MCF 10A (cell line): ENCODE measurements at regions of chr4 and their contacts with region 1.

Region 1: GRCh38 chr4:52983563-52984303 is 121.6 kb downstream of the RASL11B start:
- DNase-seq: peak; percentile 77
- H3K4me3 Mint-ChIP-seq: no peak overlapping the region
- H3K27ac Mint-ChIP-seq: no peak overlapping the region
- H3K4me1 Mint-ChIP-seq: no peaks in the 10 kb centered on the region
- H3K27me3 Mint-ChIP-seq: no peaks in the 10 kb centered on the region
- CTCF ChIP-seq: peak; percentile 50

Region 2: GRCh38 chr4:52234561-52235440 is 748.9 kb before region 1 on chr4:
- CTCF ChIA-PET with region 1: interaction called, 47 read pairs
- POLR2A ChIA-PET with region 1: no interaction called
- intact Hi-C with region 1: loop called (anchors 1 kb)
- DNase-seq: peak; percentile 69
- H3K4me3 Mint-ChIP-seq: no peak overlapping the region
- H3K27ac Mint-ChIP-seq: no peak overlapping the region
- H3K4me1 Mint-ChIP-seq: no peaks in the 10 kb centered on the region
- H3K27me3 Mint-ChIP-seq: peaks cover 12% of the 10 kb centered on the region
- CTCF ChIP-seq: peak; percentile 69

Region 3: DNA sequence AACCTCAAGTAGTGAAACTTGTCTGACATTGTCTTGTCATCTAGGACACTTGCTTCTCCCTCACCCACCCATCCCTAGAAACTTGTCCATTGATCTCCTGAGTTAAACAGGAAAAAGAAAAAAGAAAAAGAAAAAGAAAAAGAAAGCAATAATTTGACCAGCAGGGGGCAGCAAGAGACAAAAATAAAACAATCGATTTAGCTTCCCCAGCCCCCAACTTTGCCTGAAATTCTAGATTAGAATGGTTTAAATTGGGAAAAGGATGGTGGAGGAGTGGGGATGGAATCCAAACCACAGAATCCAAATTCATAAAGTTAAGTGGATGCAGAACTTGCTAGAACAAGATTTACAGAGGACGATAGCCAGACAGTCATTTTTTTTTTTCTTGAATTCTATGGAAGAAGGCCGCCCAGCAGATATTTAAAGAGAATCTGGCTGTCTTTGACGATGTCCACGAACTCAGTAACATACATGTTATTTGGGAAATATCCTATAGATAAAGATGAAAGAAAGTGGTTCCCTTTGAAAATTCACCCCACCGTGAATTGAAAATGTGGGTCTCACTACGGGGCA is 607.5 kb before region 1 on chr4:
- CTCF ChIA-PET with region 1: interaction called, 85 read pairs
- POLR2A ChIA-PET with region 1: no interaction called
- intact Hi-C with region 1: loop called (anchors 1 kb)
- DNase-seq: peak; percentile 70
- H3K4me3 Mint-ChIP-seq: no peak overlapping the region
- H3K27ac Mint-ChIP-seq: no peak overlapping the region
- H3K4me1 Mint-ChIP-seq: peaks cover 5% of the 10 kb centered on the region
- H3K27me3 Mint-ChIP-seq: peaks cover 33% of the 10 kb centered on the region
- CTCF ChIP-seq: peak; percentile 57

Region 4: DNA sequence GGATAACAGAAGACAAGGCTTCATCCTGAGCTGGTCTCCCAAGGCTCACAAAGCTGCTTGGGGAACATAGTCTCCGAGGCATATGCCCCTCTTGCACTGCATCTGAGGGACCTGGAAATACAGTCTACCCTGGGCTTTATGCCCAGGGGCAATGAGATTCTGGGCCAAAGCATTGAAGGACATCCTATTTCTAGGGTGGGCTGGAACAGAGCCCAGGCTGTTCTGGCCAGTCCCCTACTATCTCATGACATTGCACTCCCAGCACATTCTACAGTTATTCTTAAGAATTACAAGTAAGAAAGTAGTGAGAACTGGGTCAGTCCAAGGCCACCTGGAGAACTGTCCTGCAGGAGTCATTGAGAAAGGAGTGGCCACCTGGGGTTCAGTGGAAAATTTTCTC is 432.2 kb before region 1 on chr4:
- CTCF ChIA-PET with region 1: interaction called, 244 read pairs
- POLR2A ChIA-PET with region 1: interaction called, 5 read pairs
- intact Hi-C with region 1: no loop called
- DNase-seq: no peak
- H3K4me3 Mint-ChIP-seq: no peak overlapping the region
- H3K27ac Mint-ChIP-seq: no peak overlapping the region
- H3K4me1 Mint-ChIP-seq: peaks cover 12% of the 10 kb centered on the region
- H3K27me3 Mint-ChIP-seq: no peaks in the 10 kb centered on the region
- CTCF ChIP-seq: no peak

Region 5: DNA sequence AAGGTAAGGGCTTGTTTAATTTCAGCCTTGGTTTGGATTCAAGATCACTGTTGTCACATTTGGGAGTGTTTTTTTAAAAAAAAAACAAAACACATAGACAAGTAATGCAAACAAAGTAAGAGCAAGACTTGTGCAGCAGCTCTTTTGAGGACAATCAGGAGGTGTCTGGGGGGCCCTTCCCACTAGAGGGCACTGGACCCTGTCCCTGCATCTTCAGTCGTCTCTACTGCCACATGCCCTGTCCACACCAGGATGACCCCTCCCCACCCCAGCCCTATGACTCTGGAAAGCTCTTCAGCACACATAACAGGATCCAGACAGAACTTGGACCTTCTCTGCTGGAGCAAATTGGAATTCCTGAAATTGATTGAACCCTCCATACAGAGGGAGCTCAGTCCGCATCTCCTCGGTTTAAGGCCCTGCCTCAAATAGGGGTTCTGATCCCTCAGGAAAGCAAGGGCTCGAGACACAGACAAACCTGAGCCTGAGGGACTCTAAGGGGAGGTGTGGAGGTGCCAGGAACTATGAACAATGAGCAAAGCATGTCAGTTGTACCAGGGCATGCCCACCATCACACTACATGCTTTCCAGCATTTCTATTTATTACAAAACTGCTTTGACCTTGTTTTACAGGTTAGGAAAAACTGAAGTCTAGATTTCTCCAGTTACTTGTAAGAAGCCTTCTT is 395.5 kb before region 1 on chr4:
- CTCF ChIA-PET with region 1: interaction called, 9 read pairs
- POLR2A ChIA-PET with region 1: no interaction called
- intact Hi-C with region 1: loop called (anchors 1 kb)
- DNase-seq: peak; percentile 33
- H3K4me3 Mint-ChIP-seq: no peak overlapping the region
- H3K27ac Mint-ChIP-seq: no peak overlapping the region
- H3K4me1 Mint-ChIP-seq: peaks cover 5% of the 10 kb centered on the region
- H3K27me3 Mint-ChIP-seq: no peaks in the 10 kb centered on the region
- CTCF ChIP-seq: peak; percentile 32

Region 6: GRCh38 chr4:52643785-52644244 is 339.9 kb before region 1 on chr4:
- CTCF ChIA-PET with region 1: interaction called, 15 read pairs
- POLR2A ChIA-PET with region 1: no interaction called
- intact Hi-C with region 1: no loop called
- DNase-seq: peak; percentile 75
- H3K4me3 Mint-ChIP-seq: no peak overlapping the region
- H3K27ac Mint-ChIP-seq: no peak overlapping the region
- H3K4me1 Mint-ChIP-seq: peaks cover 32% of the 10 kb centered on the region
- H3K27me3 Mint-ChIP-seq: no peaks in the 10 kb centered on the region
- CTCF ChIP-seq: no peak

Region 7: GRCh38 chr4:52665592-52665991 is 318.1 kb before region 1 on chr4:
- CTCF ChIA-PET with region 1: interaction called, 4 read pairs
- POLR2A ChIA-PET with region 1: no interaction called
- intact Hi-C with region 1: loop called (anchors 5 kb)
- DNase-seq: peak; percentile 29
- H3K4me3 Mint-ChIP-seq: no peak overlapping the region
- H3K27ac Mint-ChIP-seq: no peak overlapping the region
- H3K4me1 Mint-ChIP-seq: peaks cover 10% of the 10 kb centered on the region
- H3K27me3 Mint-ChIP-seq: no peaks in the 10 kb centered on the region
- CTCF ChIP-seq: peak; percentile 24